ENCODE measurements at regions of chr2 and their contacts with region 1.

Region 1: GRCh38 chr2:72803151-72803550 is 22.7 kb downstream of the EXOC6B start:
- DNase-seq: no peak
- H3K4me3 ChIP-seq: no peak overlapping the region
- H3K27ac ChIP-seq: no peak overlapping the region
- H3K4me1 ChIP-seq: peaks cover 6% of the 10 kb centered on the region
- H3K27me3 ChIP-seq: no peaks in the 10 kb centered on the region
- CTCF ChIP-seq: no peak

Region 2: DNA sequence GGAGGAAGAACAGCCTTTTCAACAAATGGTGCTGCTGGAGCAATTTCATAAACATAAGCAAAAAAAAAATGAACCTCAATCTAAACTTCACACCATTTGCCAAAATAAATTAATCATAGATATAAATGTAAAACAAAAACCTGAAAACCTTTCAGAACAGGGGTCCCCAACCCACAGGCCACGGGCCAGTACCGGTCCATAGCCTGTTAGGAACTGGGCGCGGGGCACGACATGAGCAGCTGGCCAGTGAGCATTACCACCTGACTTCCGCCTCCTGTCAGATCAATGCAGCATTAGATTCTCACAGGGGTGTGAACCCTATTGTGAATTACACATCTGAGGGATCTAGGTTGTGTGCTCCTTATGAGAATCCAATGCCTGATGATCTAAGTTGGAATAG is 153.3 kb before region 1 on chr2:
- dilution Hi-C with region 1: no loop called
- DNase-seq: no peak
- H3K4me3 ChIP-seq: no peak overlapping the region
- H3K27ac ChIP-seq: no peak overlapping the region
- H3K4me1 ChIP-seq: no peaks in the 10 kb centered on the region
- H3K27me3 ChIP-seq: no peaks in the 10 kb centered on the region
- CTCF ChIP-seq: no peak

Region 3: DNA sequence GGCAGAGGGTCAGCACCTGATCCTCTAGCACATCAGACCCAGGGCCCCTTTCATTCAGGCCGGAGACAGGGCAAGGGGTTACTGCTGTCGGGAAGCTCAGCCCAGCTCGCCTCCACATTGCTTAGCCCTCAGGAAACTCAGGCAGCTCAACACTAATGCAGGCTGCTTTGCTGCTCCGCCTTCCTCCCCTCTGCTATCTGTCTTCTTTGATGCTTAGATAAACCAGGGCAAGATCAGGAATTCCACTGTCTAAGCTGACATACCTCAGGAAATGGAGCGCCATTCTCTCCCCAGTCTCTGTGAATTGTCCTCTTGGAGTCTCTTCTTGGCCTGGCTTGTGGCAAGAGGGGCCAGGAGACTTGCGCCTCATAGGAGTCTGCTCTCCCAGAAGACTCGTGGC is 48.2 kb after region 1 on chr2:
- dilution Hi-C with region 1: loop called (anchors 5 kb)
- DNase-seq: no peak
- H3K4me3 ChIP-seq: no peak overlapping the region
- H3K27ac ChIP-seq: no peak overlapping the region
- H3K4me1 ChIP-seq: no peaks in the 10 kb centered on the region
- H3K27me3 ChIP-seq: no peaks in the 10 kb centered on the region
- CTCF ChIP-seq: no peak

Region 4: GRCh38 chr2:73035899-73036711 is 233.0 kb after region 1 on chr2:
- dilution Hi-C with region 1: no loop called
- DNase-seq: no peak
- H3K4me3 ChIP-seq: no peak overlapping the region
- H3K27ac ChIP-seq: no peak overlapping the region
- H3K4me1 ChIP-seq: no peaks in the 10 kb centered on the region
- H3K27me3 ChIP-seq: no peaks in the 10 kb centered on the region
- CTCF ChIP-seq: peak in 2 of 3 experiments; percentile 9 to 42